Colonic mucosa (tissue), 4 donors: ENCODE measurements at regions of chr5 and their contacts with region 1.

Region 1: GRCh38 chr5:64612344-64612961 is 77.8 kb upstream of the SHISAL2B start:
- DNase-seq: no peak
- H3K4me3 ChIP-seq: no peak overlapping the region
- H3K27ac ChIP-seq: no peak overlapping the region
- H3K4me1 ChIP-seq: no peaks in the 10 kb centered on the region
- H3K27me3 ChIP-seq: no peaks in the 10 kb centered on the region
- CTCF ChIP-seq: peak; percentile 51

Region 2: DNA sequence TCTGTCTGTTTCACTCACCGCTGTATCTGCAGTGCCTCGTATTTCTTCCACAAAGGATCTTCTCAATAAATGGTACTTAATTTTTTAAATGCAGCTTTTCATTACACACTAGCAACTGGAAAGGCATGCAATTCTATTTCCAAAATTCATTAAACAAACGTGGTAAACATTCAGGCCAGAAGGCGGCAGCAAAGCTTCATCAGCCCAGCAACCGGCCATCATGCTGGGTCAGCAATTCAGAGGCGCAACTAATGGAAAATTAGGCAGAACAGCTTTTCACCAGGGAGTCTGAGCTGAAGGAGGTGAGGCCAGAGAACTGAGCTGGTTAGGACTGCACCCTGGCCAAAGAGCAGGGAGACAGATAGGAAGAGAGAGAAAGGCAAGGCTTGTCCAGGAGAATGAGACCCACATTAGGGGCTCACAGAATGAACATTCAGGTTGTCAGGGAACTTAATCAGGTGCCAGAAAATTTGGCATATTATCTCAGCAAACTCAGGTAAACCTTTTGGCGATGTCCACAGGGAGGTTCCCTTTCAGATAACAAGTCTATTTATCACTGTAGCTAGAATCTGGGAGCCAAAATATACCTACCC is 464.5 kb before region 1 on chr5:
- intact Hi-C with region 1: loop called (anchors 5 kb)
- DNase-seq: peak; percentile 34
- H3K4me3 ChIP-seq: no peak overlapping the region
- H3K27ac ChIP-seq: no peak overlapping the region
- H3K4me1 ChIP-seq: no peaks in the 10 kb centered on the region
- H3K27me3 ChIP-seq: no peaks in the 10 kb centered on the region
- CTCF ChIP-seq: peak; percentile 50

Region 3: DNA sequence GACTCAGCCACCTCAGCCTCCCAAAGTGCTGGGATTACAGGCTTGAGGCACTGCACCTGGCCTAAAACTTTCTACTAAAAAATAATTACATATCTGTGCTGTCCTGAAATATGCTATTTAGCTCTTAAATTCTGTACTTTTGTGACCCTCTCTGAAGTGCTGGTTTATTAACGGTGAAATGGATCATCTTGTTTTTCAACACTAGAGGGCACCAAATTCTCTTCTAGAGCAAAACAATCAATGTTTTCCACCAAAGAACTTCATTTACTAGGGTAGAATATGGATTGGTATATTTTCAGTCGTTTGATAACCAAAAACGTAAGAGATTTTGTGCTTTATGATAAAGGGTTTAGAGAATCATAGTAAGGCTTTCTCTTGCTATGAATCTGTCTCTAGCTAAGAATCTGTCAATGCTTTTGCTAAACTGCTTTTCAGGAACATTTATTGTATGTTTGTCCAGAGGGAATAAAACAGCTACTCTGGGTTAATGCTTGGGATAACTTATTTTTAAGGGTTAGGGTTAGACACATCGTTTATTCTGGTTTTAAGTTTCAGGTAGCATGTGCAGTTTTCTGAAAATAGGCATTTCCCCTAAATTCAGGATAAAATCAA is 383.2 kb before region 1 on chr5:
- intact Hi-C with region 1: loop called (anchors 5 kb)
- DNase-seq: no peak
- H3K4me3 ChIP-seq: no peak overlapping the region
- H3K27ac ChIP-seq: no peak overlapping the region
- H3K4me1 ChIP-seq: no peaks in the 10 kb centered on the region
- H3K27me3 ChIP-seq: no peaks in the 10 kb centered on the region
- CTCF ChIP-seq: peak; percentile 50